ENCODE measurements at regions of chr1 and their contacts with region 1.

Region 1: GRCh38 chr1:206030714-206031113 is 7.0 kb upstream of the CTSE start:
- DNase-seq: peak; percentile 62
- CTCF ChIP-seq: peak; percentile 92

Region 2: DNA sequence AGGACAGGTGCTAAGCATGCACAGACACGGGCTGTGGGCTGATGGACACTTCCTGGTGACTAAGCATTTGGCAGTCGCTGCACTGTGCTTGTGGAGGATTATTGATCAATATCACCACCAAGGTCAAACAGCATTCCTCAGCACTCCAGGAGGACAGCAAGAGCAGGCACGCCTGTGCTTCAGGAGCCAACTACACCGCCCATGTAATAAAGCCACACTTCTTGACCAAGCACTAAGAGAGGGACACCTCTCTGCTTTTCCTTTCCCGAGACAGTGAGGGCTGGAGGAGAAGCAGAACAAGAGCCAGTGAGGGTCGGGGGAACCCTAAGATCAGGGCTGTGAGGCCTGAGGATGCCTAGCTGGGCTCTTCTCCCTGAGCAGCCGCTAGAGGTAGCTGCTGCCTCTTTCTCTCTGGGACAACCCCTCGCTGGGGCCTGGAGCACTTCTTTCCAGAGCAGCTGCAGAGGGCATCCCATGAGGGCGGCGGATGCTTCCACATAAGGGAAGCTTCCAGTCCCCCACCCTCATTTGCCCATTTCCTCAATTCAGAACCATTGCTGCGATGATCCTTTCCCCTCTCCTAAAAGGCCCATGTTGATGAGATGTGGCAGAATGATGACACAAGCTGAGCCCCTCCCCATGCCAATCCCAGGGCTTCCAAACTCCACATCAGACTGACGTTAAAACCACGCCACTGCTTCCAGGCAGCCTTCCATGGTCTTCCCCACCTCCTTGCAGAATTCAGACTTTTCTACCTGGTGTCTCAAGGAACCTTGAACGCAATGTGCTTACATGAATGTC is 46.6 kb before region 1 on chr1:
- CTCF ChIA-PET with region 1: interaction called, 31 read pairs
- POLR2A ChIA-PET with region 1: no interaction called
- DNase-seq: peak; percentile 71
- CTCF ChIP-seq: peak; percentile 82

Region 3: DNA sequence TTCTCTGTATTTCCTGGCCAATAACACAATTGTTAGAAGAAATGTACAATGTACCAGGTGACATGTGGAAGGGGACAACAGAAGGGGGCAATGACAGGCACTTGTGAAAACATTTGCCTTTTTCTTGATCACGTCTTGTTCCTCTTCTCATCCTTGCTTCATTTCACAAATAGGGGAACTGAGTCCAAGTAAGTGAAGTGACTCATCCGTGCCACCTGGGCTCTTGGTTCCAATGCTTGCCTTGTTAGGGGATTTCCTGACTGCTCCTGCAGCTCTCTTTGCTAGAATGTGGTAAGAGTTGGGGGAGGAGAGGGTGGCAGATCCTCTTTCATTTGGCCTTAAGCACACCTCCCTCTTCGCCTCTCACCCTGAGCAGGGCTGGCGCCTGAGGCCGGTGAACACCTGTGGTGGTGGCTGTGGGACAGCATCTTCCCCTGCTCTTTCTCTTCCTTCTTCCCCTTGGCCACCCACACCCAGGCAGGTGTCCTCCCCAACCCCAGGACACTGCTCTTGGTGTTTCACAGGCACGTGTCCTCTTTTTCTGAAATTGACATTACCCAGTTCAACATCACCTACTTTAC is 20.0 kb after region 1 on chr1:
- CTCF ChIA-PET with region 1: interaction called, 115 read pairs
- POLR2A ChIA-PET with region 1: interaction called, 3 read pairs
- DNase-seq: peak; percentile 63
- CTCF ChIP-seq: no peak

Region 4: DNA sequence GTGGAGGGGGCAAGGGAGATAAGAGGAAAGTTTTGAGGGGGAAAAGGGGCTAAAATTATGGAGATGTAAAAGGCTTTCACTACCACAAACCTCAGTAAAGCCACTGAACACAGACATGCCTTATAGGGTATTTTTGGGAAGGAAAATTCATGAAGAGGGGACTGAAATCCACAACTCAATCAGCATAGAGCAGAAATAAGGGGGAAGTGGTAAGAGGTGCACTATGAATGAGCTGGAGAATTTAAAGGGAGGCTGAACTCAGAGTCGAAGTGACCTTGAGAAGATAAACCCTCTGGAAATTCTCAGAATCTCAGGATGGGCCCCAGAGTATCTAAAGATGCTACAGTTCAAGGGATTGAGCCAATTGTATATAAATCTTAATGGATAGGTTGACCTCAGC is 37.6 kb after region 1 on chr1:
- CTCF ChIA-PET with region 1: interaction called, 13 read pairs
- POLR2A ChIA-PET with region 1: no interaction called
- DNase-seq: no peak
- CTCF ChIP-seq: no peak

Region 5: GRCh38 chr1:206106328-206107167 is 75.8 kb after region 1 on chr1:
- CTCF ChIA-PET with region 1: interaction called, 211 read pairs
- POLR2A ChIA-PET with region 1: no interaction called
- DNase-seq: peak; percentile 86
- CTCF ChIP-seq: peak; percentile 85